ENCODE measurements at regions of chr9 and their contacts with region 1.

Region 1: GRCh38 chr9:136170006-136170901 is 34.7 kb downstream of the LHX3 start:
- DNase-seq: no peak
- H3K4me3 ChIP-seq: no peak overlapping the region
- H3K27ac ChIP-seq: no peak overlapping the region
- H3K27me3 ChIP-seq: peaks cover 33% of the 10 kb centered on the region
- CTCF ChIP-seq: peak; percentile 77

Region 2: GRCh38 chr9:136204838-136205706 is 34.8 kb after region 1 on chr9 and contains the start of gene LHX3:
- CTCF ChIA-PET with region 1: no interaction called
- POLR2A ChIA-PET with region 1: no interaction called
- DNase-seq: no peak
- H3K4me3 ChIP-seq: no peak within 1 kb of the TSS
- H3K27ac ChIP-seq: no peak within 1 kb of the TSS
- H3K27me3 ChIP-seq: peaks cover 40% of the 10 kb centered on the region
- CTCF ChIP-seq: no peak
- polyA plus RNA-seq, gene LHX3: not detected in 2 replicates

Region 3: GRCh38 chr9:136283291-136284235 is 113.3 kb after region 1 on chr9:
- CTCF ChIA-PET with region 1: interaction called, 10 read pairs
- POLR2A ChIA-PET with region 1: no interaction called
- DNase-seq: peak; percentile 20
- H3K4me3 ChIP-seq: no peak overlapping the region
- H3K27ac ChIP-seq: no peak overlapping the region
- H3K27me3 ChIP-seq: peaks cover 47% of the 10 kb centered on the region
- CTCF ChIP-seq: peak; percentile 81

Region 4: GRCh38 chr9:136400038-136400834 is 230.0 kb after region 1 on chr9 and contains the start of gene SNAPC4:
- CTCF ChIA-PET with region 1: no interaction called
- POLR2A ChIA-PET with region 1: no interaction called
- DNase-seq: peak; percentile 34
- H3K4me3 ChIP-seq: peak within 1 kb of the TSS; percentile 86
- H3K27ac ChIP-seq: peak within 1 kb of the TSS; percentile 57
- H3K27me3 ChIP-seq: no peaks in the 10 kb centered on the region
- CTCF ChIP-seq: peak; percentile 68
- polyA plus RNA-seq, gene SNAPC4: 2.2 and 2.4 TPM in 2 replicates

Region 5: GRCh38 chr9:136665111-136665703 is 495.0 kb after region 1 on chr9:
- CTCF ChIA-PET with region 1: no interaction called
- POLR2A ChIA-PET with region 1: no interaction called
- DNase-seq: no peak
- H3K4me3 ChIP-seq: peak overlapping the region; percentile 47
- H3K27ac ChIP-seq: no peak overlapping the region
- H3K27me3 ChIP-seq: peaks cover 28% of the 10 kb centered on the region
- CTCF ChIP-seq: peak; percentile 19; the same call in 1 of the 2 replicates

Measured in AG04450 (cell line).